HCT116 (cell line): ENCODE measurements at regions of chr10 and their contacts with region 1.

Region 1: DNA sequence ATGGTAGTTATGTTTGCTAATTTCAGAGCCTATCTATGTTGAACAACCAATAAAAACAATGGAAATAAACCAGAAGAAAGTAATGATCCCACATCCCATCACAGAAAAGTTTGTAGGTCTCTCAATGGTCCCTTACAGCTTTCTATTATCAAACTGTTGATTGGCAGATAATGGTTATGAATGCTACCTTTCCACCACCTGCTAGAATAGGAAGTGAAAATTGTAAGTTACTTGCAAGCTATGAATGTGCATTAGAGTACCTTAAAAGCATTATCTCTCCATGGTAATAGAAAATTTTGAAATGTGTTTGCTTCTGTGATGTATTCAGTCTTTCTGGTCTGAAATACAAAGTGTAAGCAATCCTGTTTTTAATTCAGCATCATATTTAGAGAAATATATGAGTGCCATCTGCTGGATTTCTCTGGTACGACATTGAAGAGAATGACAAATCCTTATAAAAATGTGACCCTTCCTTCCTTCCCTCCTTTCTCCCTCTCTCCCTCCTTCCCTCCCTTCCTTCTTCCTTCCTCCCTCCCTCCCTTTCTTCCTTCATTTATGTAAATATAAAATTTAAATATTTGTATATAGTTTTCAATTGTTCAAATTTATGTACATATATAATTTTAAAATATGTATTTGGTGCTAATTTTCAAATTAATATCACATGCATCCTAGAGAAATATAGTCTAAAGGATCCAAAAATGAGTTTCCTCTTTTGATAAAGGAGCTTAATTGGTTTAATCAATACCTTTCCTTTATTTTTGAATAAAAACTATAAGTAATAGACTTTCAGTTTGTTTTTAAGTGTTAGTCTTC is 41.4 kb upstream of the PNLIPRP3 start:
- DNase-seq: peak; percentile 22
- ATAC-seq: peak; percentile 77
- H3K4me3 ChIP-seq: no peak overlapping the region
- H3K27ac ChIP-seq: no peak overlapping the region
- H3K4me1 ChIP-seq: no peaks in the 10 kb centered on the region
- H3K27me3 ChIP-seq: peaks cover 73% of the 10 kb centered on the region
- CTCF ChIP-seq: peak; percentile 44 to 65 (median 46); a peak in 5 of 6 replicates
- POLR2A ChIP-seq: no peak
- RAD21 ChIP-seq: peak; percentile 74

Region 2: DNA sequence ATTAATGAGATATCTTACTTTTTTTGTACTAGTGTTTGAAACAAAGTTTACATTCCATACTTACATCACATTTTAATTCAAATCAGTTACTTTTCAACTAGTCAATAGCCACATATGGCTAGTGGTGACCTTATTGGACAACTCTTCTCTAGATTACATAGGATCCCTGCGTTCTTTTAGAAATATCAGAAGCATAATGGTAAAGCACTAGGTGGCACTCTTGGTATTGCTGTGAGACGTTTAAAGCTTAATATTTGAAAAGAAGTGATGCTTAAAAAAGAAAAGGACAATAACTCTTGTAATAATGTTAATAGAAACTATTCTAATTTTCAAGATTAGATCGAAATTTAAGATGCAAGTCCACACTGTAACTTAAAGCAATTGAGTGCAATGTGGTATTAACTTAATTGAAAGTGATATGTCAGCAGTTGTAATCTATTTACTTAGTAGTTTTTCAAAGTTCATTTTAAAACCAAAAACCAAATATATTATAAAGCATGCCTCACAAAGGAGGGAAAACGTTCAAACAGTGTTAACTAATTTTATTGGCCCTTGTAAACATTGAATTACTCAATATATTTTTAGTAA is 953.9 kb before region 1 on chr10:
- CTCF ChIA-PET with region 1: interaction called, 4 read pairs
- POLR2A ChIA-PET with region 1: no interaction called
- RAD21 ChIA-PET with region 1: interaction called in 1 of 2 experiments, 3 read pairs
- intact Hi-C with region 1: loop called (anchors 1 kb)
- DNase-seq: peak; percentile 26
- ATAC-seq: peak; percentile 87
- H3K4me3 ChIP-seq: no peak overlapping the region
- H3K27ac ChIP-seq: no peak overlapping the region
- H3K4me1 ChIP-seq: no peaks in the 10 kb centered on the region
- H3K27me3 ChIP-seq: peaks cover 5% of the 10 kb centered on the region; the same call in 1 of the 2 replicates
- CTCF ChIP-seq: peak; percentile 52 to 73 (median 62); a peak in 5 of 6 replicates
- POLR2A ChIP-seq: no peak
- RAD21 ChIP-seq: peak; percentile 77

Region 3: GRCh38 chr10:115706026-115706781 is 680.0 kb before region 1 on chr10:
- CTCF ChIA-PET with region 1: no interaction called
- POLR2A ChIA-PET with region 1: no interaction called
- RAD21 ChIA-PET with region 1: no interaction called
- intact Hi-C with region 1: loop called (anchors 1 kb)
- DNase-seq: peak; percentile 12
- ATAC-seq: peak; percentile 72
- H3K4me3 ChIP-seq: no peak overlapping the region
- H3K27ac ChIP-seq: no peak overlapping the region
- H3K4me1 ChIP-seq: no peaks in the 10 kb centered on the region
- H3K27me3 ChIP-seq: peaks cover 19% of the 10 kb centered on the region; the same call in 1 of the 2 replicates
- CTCF ChIP-seq: peak; percentile 28 to 84 (median 58); a peak in 5 of 6 replicates
- POLR2A ChIP-seq: no peak
- RAD21 ChIP-seq: peak; percentile 58

Region 4: DNA sequence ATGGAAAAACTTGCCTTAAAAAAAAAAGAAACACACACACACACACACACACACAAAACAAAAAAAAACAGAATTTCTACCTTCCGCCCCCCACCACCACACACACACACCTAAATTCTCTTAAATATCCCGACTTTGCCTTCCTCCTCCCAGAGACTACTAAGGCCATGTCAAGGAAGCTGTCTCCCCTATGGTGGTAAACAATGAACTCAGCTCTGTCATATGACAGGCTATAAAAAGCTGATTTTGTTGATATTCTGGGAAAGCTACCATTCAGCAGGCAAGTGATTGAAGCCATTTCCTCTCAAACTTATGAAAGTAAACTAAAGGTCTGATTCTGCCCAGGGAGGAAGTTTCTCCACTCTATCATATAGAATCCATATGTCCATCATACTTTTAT is 584.2 kb before region 1 on chr10:
- CTCF ChIA-PET with region 1: no interaction called
- POLR2A ChIA-PET with region 1: no interaction called
- RAD21 ChIA-PET with region 1: no interaction called
- intact Hi-C with region 1: loop called (anchors 2 kb)
- DNase-seq: no peak
- ATAC-seq: no peak
- H3K4me3 ChIP-seq: no peak overlapping the region
- H3K27ac ChIP-seq: no peak overlapping the region
- H3K4me1 ChIP-seq: no peaks in the 10 kb centered on the region
- H3K27me3 ChIP-seq: peaks cover 17% of the 10 kb centered on the region; the same call in 1 of the 2 replicates
- CTCF ChIP-seq: no peak
- POLR2A ChIP-seq: no peak
- RAD21 ChIP-seq: no peak

Region 5: GRCh38 chr10:115871855-115872254 is 514.3 kb before region 1 on chr10:
- CTCF ChIA-PET with region 1: no interaction called
- POLR2A ChIA-PET with region 1: no interaction called
- RAD21 ChIA-PET with region 1: no interaction called
- intact Hi-C with region 1: no loop called
- DNase-seq: no peak
- ATAC-seq: no peak
- H3K4me3 ChIP-seq: no peak overlapping the region
- H3K27ac ChIP-seq: no peak overlapping the region
- H3K4me1 ChIP-seq: no peaks in the 10 kb centered on the region
- H3K27me3 ChIP-seq: peaks cover 22% of the 10 kb centered on the region; the same call in 1 of the 2 replicates
- CTCF ChIP-seq: no peak
- POLR2A ChIP-seq: no peak
- RAD21 ChIP-seq: no peak

Region 6: DNA sequence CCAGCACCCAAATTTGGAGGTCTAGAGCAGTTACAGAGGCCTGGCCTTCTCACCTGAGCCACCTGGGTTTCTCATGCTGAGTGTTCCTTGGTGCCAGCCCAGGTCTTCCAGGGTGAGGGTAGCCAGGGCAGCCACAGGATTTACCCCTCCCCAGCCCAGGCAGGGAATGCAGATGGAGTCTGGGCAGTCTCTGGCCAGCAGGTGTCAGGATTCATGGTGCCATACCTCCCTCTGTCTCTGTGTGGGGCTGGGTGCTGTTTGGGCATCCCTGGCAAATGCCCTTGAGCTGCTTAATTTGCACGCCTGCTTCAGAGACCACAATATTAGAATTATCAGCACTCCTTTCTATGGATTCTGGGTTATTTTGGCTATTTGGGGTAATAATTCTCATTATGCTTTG is 359.9 kb before region 1 on chr10:
- CTCF ChIA-PET with region 1: no interaction called
- POLR2A ChIA-PET with region 1: no interaction called
- RAD21 ChIA-PET with region 1: no interaction called
- intact Hi-C with region 1: loop called (anchors 1 kb)
- DNase-seq: no peak
- ATAC-seq: peak; percentile 85
- H3K4me3 ChIP-seq: no peak overlapping the region
- H3K27ac ChIP-seq: no peak overlapping the region
- H3K4me1 ChIP-seq: no peaks in the 10 kb centered on the region
- H3K27me3 ChIP-seq: no peaks in the 10 kb centered on the region
- CTCF ChIP-seq: peak; percentile 17 to 41 (median 35); a peak in 4 of 6 replicates
- POLR2A ChIP-seq: no peak
- RAD21 ChIP-seq: 0 out of 2 replicates have a peak, but pooled peaks have one; percentile 16

Region 7: DNA sequence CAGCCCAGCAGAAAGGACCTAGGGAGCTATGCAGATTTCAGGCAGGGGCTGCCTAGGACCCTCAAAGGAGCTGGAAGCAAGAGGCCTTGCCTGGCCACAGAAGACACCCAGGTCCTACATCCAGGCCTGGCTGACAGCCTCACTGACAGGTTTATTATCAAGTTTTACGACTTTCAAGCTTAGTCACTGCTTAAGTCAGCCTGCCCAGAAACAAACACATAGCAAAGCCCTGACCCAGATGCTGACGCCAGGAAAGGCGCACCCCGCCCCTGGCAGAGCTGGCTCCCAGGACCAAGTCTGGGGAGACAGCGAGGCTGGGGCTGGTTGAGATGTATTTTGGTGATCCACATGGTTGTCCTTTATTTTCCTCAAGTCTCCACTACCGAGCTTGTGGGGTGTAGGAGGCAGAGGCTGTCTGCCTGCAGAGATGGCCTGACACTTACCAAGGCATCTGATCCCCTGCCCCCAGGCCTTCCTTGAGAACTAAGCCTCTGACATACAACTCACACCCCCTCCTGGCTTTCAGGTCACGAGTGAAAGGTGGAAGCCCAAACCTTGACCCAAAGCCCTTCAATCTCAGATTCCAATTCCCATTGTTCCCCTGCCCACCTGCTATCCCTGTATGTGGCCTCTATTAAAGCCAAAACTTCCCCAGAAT is 1075.7 kb after region 1 on chr10:
- CTCF ChIA-PET with region 1: no interaction called
- POLR2A ChIA-PET with region 1: no interaction called
- RAD21 ChIA-PET with region 1: no interaction called
- intact Hi-C with region 1: no loop called
- DNase-seq: peak; percentile 77
- ATAC-seq: peak; percentile 86
- H3K4me3 ChIP-seq: no peak overlapping the region
- H3K27ac ChIP-seq: no peak overlapping the region
- H3K4me1 ChIP-seq: peaks cover 7 to 23% of the 10 kb centered on the region in 2 experiments
- H3K27me3 ChIP-seq: no peaks in the 10 kb centered on the region
- CTCF ChIP-seq: no peak
- POLR2A ChIP-seq: no peak
- RAD21 ChIP-seq: no peak